Common myeloid progenitor, CD34-positive (primary cell): ENCODE measurements at regions of chr3 and their contacts with region 1.

Region 1: GRCh38 chr3:30644593-30645012 is 38.2 kb downstream of the TGFBR2 start:
- DNase-seq: peak in 2 of 3 donors; percentile 87 to 93
- H3K4me3 ChIP-seq: no peak overlapping the region
- H3K27ac ChIP-seq: peak overlapping the region; percentile 55 to 69
- H3K4me1 ChIP-seq: peaks cover 64 to 96% (median 80%) of the 10 kb centered on the region in 4 experiments
- H3K27me3 ChIP-seq: no peaks in the 10 kb centered on the region

Region 2: GRCh38 chr3:30658328-30659052 is 13.9 kb after region 1 on chr3:
- CTCF ChIA-PET with region 1: interaction called, 18 read pairs
- POLR2A ChIA-PET with region 1: no interaction called
- DNase-seq: peak in 2 of 3 donors; percentile 71 to 85
- H3K4me3 ChIP-seq: peak overlapping the region in 5 of 7 experiments; percentile 2 to 36 (median 13)
- H3K27ac ChIP-seq: peak overlapping the region in 1 of 2 experiments; percentile 50
- H3K4me1 ChIP-seq: peaks cover 31 to 72% (median 42%) of the 10 kb centered on the region in 4 experiments
- H3K27me3 ChIP-seq: no peaks in the 10 kb centered on the region

Region 3: GRCh38 chr3:30708472-30708871 is 63.9 kb after region 1 on chr3:
- CTCF ChIA-PET with region 1: no interaction called
- POLR2A ChIA-PET with region 1: no interaction called
- DNase-seq: no peak
- H3K4me3 ChIP-seq: no peak overlapping the region
- H3K27ac ChIP-seq: no peak overlapping the region
- H3K4me1 ChIP-seq: no peaks in the 10 kb centered on the region
- H3K27me3 ChIP-seq: no peaks in the 10 kb centered on the region

Region 4: DNA sequence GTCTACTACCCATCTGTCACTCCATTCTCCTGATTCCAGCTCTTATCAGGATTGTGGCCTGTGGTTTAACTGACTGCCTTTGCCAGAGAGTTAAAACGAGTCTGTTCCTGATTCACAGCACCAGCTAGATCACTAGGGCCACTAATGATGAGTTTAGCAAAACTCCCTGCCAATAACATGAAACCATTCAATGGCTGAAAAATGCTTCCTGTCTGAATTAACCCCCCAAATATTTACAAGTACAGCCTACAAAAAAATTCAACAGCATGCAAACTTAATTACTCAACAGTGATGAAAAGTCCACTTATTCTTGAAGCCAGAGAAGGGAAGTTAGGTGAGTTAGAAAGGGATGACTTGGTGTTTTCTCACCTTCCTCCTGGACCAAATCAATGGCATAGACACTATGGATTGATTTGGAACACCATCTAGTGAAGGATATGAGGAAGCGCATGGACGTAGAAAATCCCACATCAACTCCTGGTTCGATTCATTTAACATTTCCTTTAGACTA is 103.2 kb after region 1 on chr3:
- CTCF ChIA-PET with region 1: no interaction called
- POLR2A ChIA-PET with region 1: no interaction called
- DNase-seq: peak; percentile 21 to 50 (median 45)
- H3K4me3 ChIP-seq: no peak overlapping the region
- H3K27ac ChIP-seq: no peak overlapping the region
- H3K4me1 ChIP-seq: peaks cover 3 to 13% (median 6%) of the 10 kb centered on the region in 4 experiments
- H3K27me3 ChIP-seq: no peaks in the 10 kb centered on the region